CD4-positive, alpha-beta T cell (primary cell): ENCODE measurements at regions of chr17 and their contacts with region 1.

Region 1: GRCh38 chr17:35161281-35161761 is 13.7 kb downstream of the UNC45B start:
- DNase-seq: peak in 6 of 14 experiments; percentile 15 to 78 (median 56)
- ATAC-seq: peak; percentile 70
- H3K4me3 ChIP-seq: peak overlapping the region; percentile 30
- H3K4me3 Mint-ChIP-seq: peak overlapping the region; percentile 67
- H3K27ac ChIP-seq: peak overlapping the region; percentile 62 to 68
- H3K27ac Mint-ChIP-seq: peak overlapping the region; percentile 89
- H3K4me1 ChIP-seq: peaks cover 53% of the 10 kb centered on the region
- H3K4me1 Mint-ChIP-seq: peaks cover 66% of the 10 kb centered on the region
- H3K27me3 ChIP-seq: no peaks in the 10 kb centered on the region
- H3K27me3 Mint-ChIP-seq: no peaks in the 10 kb centered on the region
- CTCF ChIP-seq: no peak

Region 2: DNA sequence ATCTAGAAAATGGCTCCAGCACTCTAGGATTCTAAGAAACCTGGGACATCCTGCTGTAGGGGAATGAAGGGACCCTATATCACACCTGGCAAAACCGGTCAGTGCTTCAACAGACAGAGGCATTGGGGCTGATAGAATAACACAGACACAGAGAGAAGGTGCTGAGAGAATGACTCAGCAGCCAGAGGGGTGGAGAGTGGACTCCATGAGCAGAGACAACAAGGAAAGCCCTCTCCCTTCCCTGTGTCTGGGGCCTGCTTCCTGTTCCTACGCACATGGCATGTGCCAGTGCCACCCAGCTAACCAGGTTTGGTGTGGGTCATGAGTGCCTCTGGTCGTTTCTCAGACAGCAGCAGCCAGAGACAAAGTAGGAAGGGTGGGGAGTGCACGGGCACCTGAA is 340.4 kb before region 1 on chr17:
- CTCF ChIA-PET with region 1: no interaction called
- POLR2A ChIA-PET with region 1: no interaction called
- intact Hi-C with region 1: no loop called
- DNase-seq: no peak
- ATAC-seq: no peak
- H3K4me3 ChIP-seq: no peak overlapping the region
- H3K4me3 Mint-ChIP-seq: no peak overlapping the region
- H3K27ac ChIP-seq: no peak overlapping the region
- H3K27ac Mint-ChIP-seq: no peak overlapping the region
- H3K4me1 ChIP-seq: no peaks in the 10 kb centered on the region
- H3K4me1 Mint-ChIP-seq: no peaks in the 10 kb centered on the region
- H3K27me3 ChIP-seq: no peaks in the 10 kb centered on the region
- H3K27me3 Mint-ChIP-seq: peaks cover 15% of the 10 kb centered on the region
- CTCF ChIP-seq: no peak

Region 3: DNA sequence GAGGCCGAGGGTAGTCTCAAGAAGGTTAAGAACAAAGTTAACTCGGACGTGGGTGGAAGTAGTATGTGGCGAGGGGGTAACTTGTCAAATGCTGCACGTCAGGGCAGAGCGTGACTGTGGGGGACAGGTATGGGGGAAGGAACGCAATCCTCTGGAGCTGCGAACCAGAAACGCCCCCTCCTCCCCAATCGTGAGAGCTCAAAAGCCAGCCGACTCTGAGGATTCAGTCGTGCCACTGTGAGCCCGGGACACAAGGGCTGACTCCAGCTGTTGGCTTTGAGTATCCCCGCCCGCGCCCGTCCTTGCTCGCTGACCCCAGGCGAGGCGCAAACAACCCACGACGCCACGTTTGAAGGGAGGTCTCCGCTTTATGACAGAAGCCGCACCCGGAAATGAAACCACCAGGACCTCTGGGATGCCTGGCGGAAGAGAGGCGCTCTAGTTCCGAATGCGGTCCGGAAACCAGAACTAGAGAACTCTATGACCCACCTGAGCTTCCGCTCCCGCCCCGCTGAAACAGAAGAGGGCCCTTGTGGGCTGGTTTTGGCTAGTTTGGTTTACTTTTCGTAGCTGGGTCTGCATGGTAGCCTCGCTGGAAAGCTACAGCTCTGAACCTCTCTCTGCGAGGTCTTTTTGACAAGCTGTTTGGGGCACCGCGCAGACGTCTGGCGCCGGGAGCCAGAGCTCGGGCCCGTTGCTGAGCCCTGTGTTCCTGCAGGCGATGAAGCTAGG is 417.0 kb after region 1 on chr17 and contains the start of gene PEX12:
- CTCF ChIA-PET with region 1: no interaction called
- POLR2A ChIA-PET with region 1: interaction called, 15 read pairs
- intact Hi-C with region 1: no loop called
- DNase-seq: peak; percentile 77 to 96 (median 86)
- ATAC-seq: peak; percentile 96
- H3K4me3 ChIP-seq: peak within 1 kb of the TSS; percentile 85
- H3K4me3 Mint-ChIP-seq: peak within 1 kb of the TSS; percentile 92
- H3K27ac ChIP-seq: peak within 1 kb of the TSS; percentile 90 to 93
- H3K27ac Mint-ChIP-seq: peak within 1 kb of the TSS; percentile 97
- H3K4me1 ChIP-seq: peaks cover 21% of the 10 kb centered on the region
- H3K4me1 Mint-ChIP-seq: peaks cover 42% of the 10 kb centered on the region
- H3K27me3 ChIP-seq: no peaks in the 10 kb centered on the region
- H3K27me3 Mint-ChIP-seq: no peaks in the 10 kb centered on the region
- CTCF ChIP-seq: no peak
- total RNA-seq, gene PEX12: 3.0 to 3.2 TPM